A549 (cell line): ENCODE measurements at regions of chr20 and their contacts with region 1.

Region 1: GRCh38 chr20:54132612-54133433 is 41.0 kb downstream of the CYP24A1 start:
- DNase-seq: peak; percentile 70 to 96
- ATAC-seq: peak; percentile 83 to 93
- H3K4me3 ChIP-seq: no peak overlapping the region
- H3K27ac ChIP-seq: peak overlapping the region; percentile 87 to 96
- H3K4me1 ChIP-seq: peaks cover 49% of the 10 kb centered on the region
- CTCF ChIP-seq: no peak
- EP300 ChIP-seq: peak; percentile 98
- POLR2A ChIP-seq: no peak
- RAD21 ChIP-seq: peak in 1 of 2 experiments; percentile 47; a peak in 4 of 5 replicates

Region 2: GRCh38 chr20:53739799-53740785 is 392.7 kb before region 1 on chr20:
- CTCF ChIA-PET with region 1: no interaction called
- POLR2A ChIA-PET with region 1: no interaction called
- DNase-seq: no peak
- ATAC-seq: peak in 1 of 2 experiments; percentile 10; a peak in 1 of 6 replicates
- H3K4me3 ChIP-seq: 0 out of 3 replicates have a peak overlapping the region, but pooled peaks have one; percentile 4
- H3K27ac ChIP-seq: peak overlapping the region; percentile 89 to 90
- H3K4me1 ChIP-seq: peaks cover 62% of the 10 kb centered on the region
- CTCF ChIP-seq: no peak
- EP300 ChIP-seq: no peak
- POLR2A ChIP-seq: no peak
- RAD21 ChIP-seq: no peak

Region 3: GRCh38 chr20:54115151-54115854 is 17.5 kb before region 1 on chr20:
- CTCF ChIA-PET with region 1: interaction called, 6 read pairs
- POLR2A ChIA-PET with region 1: interaction called, 42 read pairs
- DNase-seq: peak; percentile 77 to 92
- ATAC-seq: peak; percentile 84 to 88
- H3K4me3 ChIP-seq: no peak overlapping the region
- H3K27ac ChIP-seq: peak overlapping the region; percentile 94 to 98
- H3K4me1 ChIP-seq: peaks cover 76% of the 10 kb centered on the region
- CTCF ChIP-seq: no peak
- EP300 ChIP-seq: no peak
- POLR2A ChIP-seq: no peak
- RAD21 ChIP-seq: no peak

Region 4: GRCh38 chr20:54162360-54163012 is 29.7 kb after region 1 on chr20:
- CTCF ChIA-PET with region 1: interaction called, 5 read pairs
- POLR2A ChIA-PET with region 1: interaction called, 18 read pairs
- DNase-seq: peak in 1 of 2 experiments; percentile 47
- ATAC-seq: peak in 1 of 2 experiments; percentile 0; a peak in 3 of 6 replicates
- H3K4me3 ChIP-seq: peak overlapping the region; percentile 20
- H3K27ac ChIP-seq: peak overlapping the region; percentile 93 to 100
- H3K4me1 ChIP-seq: peaks cover 100% of the 10 kb centered on the region
- CTCF ChIP-seq: no peak
- EP300 ChIP-seq: no peak
- POLR2A ChIP-seq: no peak
- RAD21 ChIP-seq: no peak

Region 5: DNA sequence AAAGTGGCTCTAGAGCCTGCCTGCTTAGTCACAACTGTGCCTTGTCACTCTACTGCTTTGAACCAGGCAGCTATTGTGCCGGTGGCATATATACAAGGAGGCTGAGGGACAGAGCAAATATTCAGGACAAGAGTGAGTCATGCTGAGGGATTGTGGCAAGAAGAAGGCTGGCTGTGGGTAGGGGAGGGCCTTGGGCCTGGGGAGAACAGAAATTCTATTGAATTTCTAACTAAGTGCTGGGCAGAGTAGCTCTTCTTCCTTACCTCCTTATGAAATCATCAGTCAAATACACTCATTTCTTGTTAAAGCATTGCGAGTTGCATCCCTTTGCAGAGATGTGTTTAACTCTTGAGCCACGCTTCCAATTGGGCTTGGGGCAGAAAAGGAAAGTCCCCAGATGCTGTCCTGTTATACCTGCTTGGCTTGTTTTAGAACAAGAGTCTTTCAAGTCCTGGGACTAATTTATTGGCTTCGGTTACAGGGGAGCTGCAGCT is 134.7 kb after region 1 on chr20:
- CTCF ChIA-PET with region 1: no interaction called
- POLR2A ChIA-PET with region 1: no interaction called
- DNase-seq: no peak
- ATAC-seq: peak in 1 of 2 experiments; percentile 64; a peak in 3 of 6 replicates
- H3K4me3 ChIP-seq: no peak overlapping the region
- H3K27ac ChIP-seq: no peak overlapping the region
- H3K4me1 ChIP-seq: 0 out of 3 replicates have a peak, but pooled peaks cover 3% of the 10 kb centered on the region
- CTCF ChIP-seq: no peak
- EP300 ChIP-seq: no peak
- POLR2A ChIP-seq: no peak
- RAD21 ChIP-seq: no peak